ENCODE measurements at regions of chr22 and their contacts with region 1.

Region 1: DNA sequence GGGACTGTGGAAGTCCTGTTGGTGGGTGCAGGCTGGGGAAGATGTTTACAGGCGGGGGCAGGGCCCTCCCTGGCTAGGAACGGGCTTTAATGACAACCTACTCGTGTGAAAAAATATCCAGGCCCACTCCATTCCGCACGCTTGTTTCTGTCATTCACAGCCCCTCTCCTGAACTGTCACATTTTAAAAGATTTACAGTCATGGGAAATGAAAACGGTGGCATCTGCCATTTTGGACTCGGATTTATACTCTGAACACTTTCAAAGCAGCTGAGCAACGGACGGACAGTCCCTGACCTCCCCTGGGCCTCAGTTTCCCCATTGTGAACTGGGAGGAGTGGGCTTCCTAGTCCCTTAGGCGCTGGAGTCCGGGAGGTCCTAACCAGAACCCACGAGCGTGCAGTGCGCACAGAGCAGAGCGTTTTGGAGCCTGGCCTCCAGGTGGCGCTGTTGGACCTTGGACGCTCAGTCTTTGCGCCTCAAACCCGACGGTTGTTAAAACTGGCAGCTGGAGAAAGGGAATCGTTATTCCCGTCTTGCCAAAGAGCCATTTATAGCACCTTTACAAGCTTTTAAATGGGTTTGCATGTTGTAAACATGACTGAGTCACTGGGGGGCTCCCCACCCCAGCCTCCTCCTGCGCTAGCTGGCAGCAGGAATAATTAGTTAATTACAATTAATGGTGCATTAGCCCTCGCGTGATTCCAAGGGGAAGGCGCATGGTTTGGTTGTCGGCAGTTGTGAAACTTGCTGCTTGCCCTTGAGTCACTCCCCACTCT is 75.3 kb downstream of the FBLN1 start:
- DNase-seq: peak; percentile 52 to 89
- ATAC-seq: peak; percentile 83 to 89
- H3K4me3 ChIP-seq: no peak overlapping the region
- H3K27ac ChIP-seq: peak overlapping the region; percentile 81 to 93
- H3K4me1 ChIP-seq: peaks cover 39% of the 10 kb centered on the region
- CTCF ChIP-seq: peak; percentile 85
- EP300 ChIP-seq: no peak; a peak in 1 of 5 replicates
- POLR2A ChIP-seq: no peak
- RAD21 ChIP-seq: peak; percentile 97

Region 2: GRCh38 chr22:45537734-45538181 is 40.2 kb before region 1 on chr22:
- CTCF ChIA-PET with region 1: no interaction called
- POLR2A ChIA-PET with region 1: no interaction called
- DNase-seq: no peak
- ATAC-seq: no peak
- H3K4me3 ChIP-seq: no peak overlapping the region
- H3K27ac ChIP-seq: no peak overlapping the region
- H3K4me1 ChIP-seq: no peaks in the 10 kb centered on the region
- CTCF ChIP-seq: no peak
- EP300 ChIP-seq: no peak
- POLR2A ChIP-seq: no peak
- RAD21 ChIP-seq: no peak

Region 3: GRCh38 chr22:45602824-45603630 is 25.1 kb after region 1 on chr22:
- CTCF ChIA-PET with region 1: interaction called, 15 read pairs
- POLR2A ChIA-PET with region 1: no interaction called
- DNase-seq: peak in 1 of 2 experiments; percentile 82
- ATAC-seq: peak in 1 of 2 experiments; percentile 44; a peak in 3 of 6 replicates
- H3K4me3 ChIP-seq: no peak overlapping the region
- H3K27ac ChIP-seq: peak overlapping the region; percentile 97 to 99
- H3K4me1 ChIP-seq: peaks cover 66% of the 10 kb centered on the region
- CTCF ChIP-seq: no peak
- EP300 ChIP-seq: no peak
- POLR2A ChIP-seq: no peak
- RAD21 ChIP-seq: no peak

Region 4: DNA sequence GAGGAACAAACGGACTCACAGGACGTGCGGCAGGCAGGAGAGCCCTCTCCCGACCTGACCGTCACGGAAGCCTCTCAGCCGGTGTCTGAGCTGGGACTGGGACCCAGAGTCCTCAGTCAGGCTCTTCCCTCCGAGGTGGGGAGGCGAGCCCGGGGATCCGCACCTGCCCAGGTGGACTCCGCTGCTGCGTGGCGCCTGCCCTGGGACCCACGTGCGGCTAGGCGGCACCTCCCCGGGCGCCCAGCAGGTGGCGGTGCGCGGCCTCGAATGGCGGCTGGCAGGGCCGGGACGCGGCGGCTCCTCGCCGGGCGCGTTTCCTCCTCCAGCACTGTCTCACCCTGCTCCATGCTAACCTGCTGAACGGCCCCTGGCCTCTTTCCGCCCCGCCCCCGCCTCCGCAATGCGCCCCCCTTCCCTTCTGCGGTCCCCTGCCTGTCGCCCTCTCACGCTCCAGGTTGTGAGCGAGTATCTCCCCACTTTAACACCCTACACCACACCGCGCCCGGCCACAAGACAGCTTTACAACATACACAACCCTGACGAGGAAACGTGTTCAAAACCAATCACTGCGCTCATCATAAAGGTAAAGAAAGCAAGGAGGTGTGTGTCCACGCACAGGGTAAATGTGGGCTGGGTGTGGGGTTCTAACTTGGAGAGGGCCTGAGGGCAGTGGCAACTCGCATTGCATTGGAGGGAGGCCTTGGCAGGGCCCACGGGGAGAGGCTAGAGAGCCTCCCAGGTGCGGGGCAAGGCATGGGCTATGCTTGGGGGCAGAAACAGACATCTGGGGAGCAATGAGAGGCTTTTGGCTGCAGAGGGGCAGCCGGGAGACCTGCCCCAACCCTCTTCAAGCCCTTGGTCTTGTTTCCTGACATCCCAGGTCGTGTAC is 67.8 kb after region 1 on chr22:
- CTCF ChIA-PET with region 1: interaction called, 24 read pairs
- POLR2A ChIA-PET with region 1: no interaction called
- DNase-seq: peak; percentile 53 to 77
- ATAC-seq: peak; percentile 94 to 96
- H3K4me3 ChIP-seq: no peak overlapping the region
- H3K27ac ChIP-seq: peak overlapping the region; percentile 99 to 100
- H3K4me1 ChIP-seq: peaks cover 40% of the 10 kb centered on the region
- CTCF ChIP-seq: peak; percentile 82
- EP300 ChIP-seq: no peak
- POLR2A ChIP-seq: no peak
- RAD21 ChIP-seq: peak; percentile 82 to 97

Region 5: GRCh38 chr22:45863981-45864751 is 286.2 kb after region 1 on chr22:
- CTCF ChIA-PET with region 1: interaction called, 16 read pairs
- POLR2A ChIA-PET with region 1: no interaction called
- DNase-seq: peak; percentile 45 to 62
- ATAC-seq: peak in 1 of 2 experiments; percentile 31; a peak in 3 of 6 replicates
- H3K4me3 ChIP-seq: no peak overlapping the region
- H3K27ac ChIP-seq: peak overlapping the region; percentile 35 to 74; a peak in 5 of 6 replicates
- H3K4me1 ChIP-seq: peaks cover 39% of the 10 kb centered on the region
- CTCF ChIP-seq: peak; percentile 55
- EP300 ChIP-seq: no peak
- POLR2A ChIP-seq: no peak
- RAD21 ChIP-seq: peak; percentile 61 to 62

Region 6: GRCh38 chr22:45960477-45961386 is 382.8 kb after region 1 on chr22:
- CTCF ChIA-PET with region 1: interaction called, 13 read pairs
- POLR2A ChIA-PET with region 1: no interaction called
- DNase-seq: no peak
- ATAC-seq: no peak
- H3K4me3 ChIP-seq: no peak overlapping the region
- H3K27ac ChIP-seq: peak overlapping the region in 1 of 2 experiments; percentile 66; a peak in 3 of 6 replicates
- H3K4me1 ChIP-seq: peaks cover 71% of the 10 kb centered on the region
- CTCF ChIP-seq: no peak
- EP300 ChIP-seq: no peak
- POLR2A ChIP-seq: no peak
- RAD21 ChIP-seq: no peak

Region 7: DNA sequence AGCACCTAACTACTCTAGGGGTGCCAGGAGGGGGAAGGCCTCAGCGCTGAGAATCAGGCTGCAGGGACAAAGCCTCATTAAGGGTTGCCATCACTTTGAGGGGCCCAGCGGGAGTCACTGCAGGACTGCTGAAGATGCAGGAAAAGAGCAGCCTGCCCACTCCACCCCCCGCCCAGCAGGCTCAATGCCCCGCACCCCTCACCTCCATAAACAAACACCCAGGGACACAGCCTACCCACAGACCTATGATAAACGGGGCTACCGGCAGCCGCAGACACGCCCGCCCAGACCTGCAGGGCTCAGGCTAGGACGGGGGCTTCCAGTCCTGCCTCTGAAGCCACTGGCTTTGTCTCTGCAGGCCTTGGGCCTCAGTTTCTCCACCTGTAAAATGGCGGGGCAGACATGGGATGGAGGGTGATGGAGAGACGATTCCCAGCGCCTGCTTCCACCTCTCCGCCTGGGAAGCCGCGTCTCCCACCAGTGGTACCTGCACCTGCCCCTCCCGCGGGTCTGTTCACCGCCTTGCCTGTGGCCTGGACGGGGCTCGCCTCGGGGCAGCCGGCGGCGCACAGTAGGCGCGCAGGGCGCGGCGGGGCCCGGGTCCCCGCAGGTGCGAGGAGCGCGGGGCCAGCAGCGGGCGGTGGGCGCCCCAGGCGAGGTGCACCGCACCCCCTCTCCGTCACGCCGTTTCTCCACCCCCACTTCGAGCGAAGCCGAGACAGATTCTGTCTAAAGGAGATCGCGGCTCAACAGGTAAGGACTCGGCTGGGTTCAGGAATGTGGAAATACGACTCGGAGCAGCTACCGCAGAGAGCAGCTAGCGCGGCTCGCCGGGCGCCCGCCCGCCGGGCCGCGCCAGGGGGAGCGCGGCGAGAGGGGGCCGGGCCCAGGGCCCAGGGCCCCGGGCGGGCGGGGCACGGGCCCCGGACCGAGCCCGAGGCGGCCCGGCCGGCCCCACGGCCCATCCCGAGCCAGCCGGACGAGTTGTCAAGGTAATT is 397.5 kb after region 1 on chr22:
- CTCF ChIA-PET with region 1: interaction called, 12 read pairs
- POLR2A ChIA-PET with region 1: interaction called, 9 read pairs
- DNase-seq: no peak
- ATAC-seq: no peak
- H3K4me3 ChIP-seq: peak overlapping the region; percentile 99
- H3K27ac ChIP-seq: peak overlapping the region; percentile 97 to 99
- H3K4me1 ChIP-seq: peaks cover 48% of the 10 kb centered on the region
- CTCF ChIP-seq: no peak
- EP300 ChIP-seq: no peak
- POLR2A ChIP-seq: no peak
- RAD21 ChIP-seq: no peak